ENCODE measurements at regions of chr9 and their contacts with region 1.

Region 1: DNA sequence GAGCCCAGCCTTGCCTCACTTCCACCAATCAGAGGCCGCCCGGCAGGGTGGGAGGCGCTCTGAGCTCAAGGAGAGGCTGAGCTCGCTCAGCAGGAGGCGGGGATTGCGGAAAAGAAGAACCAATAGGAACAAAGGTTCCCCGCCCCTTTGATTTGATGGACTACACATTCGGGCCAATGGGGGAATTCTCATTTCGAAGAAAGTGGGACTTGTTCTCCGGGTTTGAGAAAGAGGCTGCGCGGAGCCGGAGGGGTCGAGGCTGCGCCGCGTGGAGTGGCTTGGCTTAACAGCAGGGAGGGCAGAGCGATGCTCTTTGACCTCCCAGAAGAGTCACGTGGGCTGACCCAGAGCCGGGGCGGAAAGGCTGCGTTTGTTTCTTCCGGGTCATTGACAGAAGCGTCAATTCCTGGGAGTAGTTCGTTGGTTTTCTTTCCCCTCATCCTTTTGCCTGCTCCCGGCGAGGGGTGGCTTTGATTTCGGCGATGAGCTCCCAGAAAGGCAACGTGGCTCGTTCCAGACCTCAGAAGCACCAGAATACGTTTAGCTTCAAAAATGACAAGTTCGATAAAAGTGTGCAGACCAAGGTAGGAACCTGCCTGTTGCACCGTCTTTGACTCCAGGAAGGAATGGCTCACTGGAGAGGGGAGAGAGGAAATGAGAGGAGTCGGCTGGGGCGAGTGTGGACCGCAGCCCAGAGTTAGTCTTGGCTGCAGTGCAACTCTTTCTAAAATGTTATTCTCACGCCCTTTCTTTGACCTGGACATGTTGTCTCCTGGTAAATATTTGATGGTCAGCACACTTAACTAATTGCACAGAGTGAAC is at the start of gene C9orf85:
- DNase-seq: peak; percentile 97
- H3K4me3 Mint-ChIP-seq: peak within 1 kb of the TSS; percentile 99
- H3K27ac Mint-ChIP-seq: peak within 1 kb of the TSS; percentile 92
- H3K4me1 Mint-ChIP-seq: peaks cover 55% of the 10 kb centered on the region
- H3K27me3 Mint-ChIP-seq: no peaks in the 10 kb centered on the region
- total RNA-seq, gene C9orf85: 6.2 to 6.7 TPM

Region 2: GRCh38 chr9:71604197-71605063 is 307.0 kb before region 1 on chr9:
- CTCF ChIA-PET with region 1: no interaction called
- intact Hi-C with region 1: loop called (anchors 10 kb)
- DNase-seq: peak; percentile 89
- H3K4me3 Mint-ChIP-seq: no peak overlapping the region
- H3K27ac Mint-ChIP-seq: no peak overlapping the region
- H3K4me1 Mint-ChIP-seq: no peaks in the 10 kb centered on the region
- H3K27me3 Mint-ChIP-seq: no peaks in the 10 kb centered on the region

Region 3: GRCh38 chr9:71663931-71664459 is 247.5 kb before region 1 on chr9:
- CTCF ChIA-PET with region 1: no interaction called
- intact Hi-C with region 1: no loop called
- DNase-seq: no peak
- H3K4me3 Mint-ChIP-seq: no peak overlapping the region
- H3K27ac Mint-ChIP-seq: no peak overlapping the region
- H3K4me1 Mint-ChIP-seq: no peaks in the 10 kb centered on the region
- H3K27me3 Mint-ChIP-seq: peaks cover 2% of the 10 kb centered on the region

Region 4: GRCh38 chr9:71806901-71807307 is 104.6 kb before region 1 on chr9:
- CTCF ChIA-PET with region 1: interaction called, 4 read pairs
- intact Hi-C with region 1: loop called (anchors 1 kb)
- DNase-seq: peak; percentile 77
- H3K4me3 Mint-ChIP-seq: no peak overlapping the region
- H3K27ac Mint-ChIP-seq: no peak overlapping the region
- H3K4me1 Mint-ChIP-seq: peaks cover 8% of the 10 kb centered on the region
- H3K27me3 Mint-ChIP-seq: no peaks in the 10 kb centered on the region

Region 5: GRCh38 chr9:71897577-71897976 is 13.9 kb before region 1 on chr9:
- CTCF ChIA-PET with region 1: interaction called, 3 read pairs
- intact Hi-C with region 1: loop called (anchors 2 kb)
- DNase-seq: peak; percentile 33
- H3K4me3 Mint-ChIP-seq: no peak overlapping the region
- H3K27ac Mint-ChIP-seq: no peak overlapping the region
- H3K4me1 Mint-ChIP-seq: peaks cover 66% of the 10 kb centered on the region
- H3K27me3 Mint-ChIP-seq: no peaks in the 10 kb centered on the region

Region 6: DNA sequence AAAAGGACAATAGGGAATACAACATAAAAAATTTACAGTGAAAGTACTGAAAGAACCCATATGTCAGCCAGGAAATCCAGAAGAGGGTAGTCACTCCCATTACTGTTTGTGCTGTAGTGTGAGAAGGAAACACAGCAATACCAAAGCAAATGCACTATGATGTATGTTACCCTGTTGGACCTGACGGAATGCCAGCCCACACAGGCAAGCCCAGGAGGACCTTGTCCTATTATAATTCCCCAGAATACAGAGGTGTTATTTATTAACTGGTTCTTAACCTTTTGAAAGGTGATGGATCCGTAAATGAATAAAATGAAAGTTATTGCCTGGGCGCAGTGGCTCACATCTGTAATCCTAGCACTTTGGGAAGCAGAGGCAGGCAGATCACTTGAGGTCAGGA is 316.8 kb after region 1 on chr9:
- CTCF ChIA-PET with region 1: no interaction called
- intact Hi-C with region 1: no loop called
- DNase-seq: no peak
- H3K4me3 Mint-ChIP-seq: no peak overlapping the region
- H3K27ac Mint-ChIP-seq: no peak overlapping the region
- H3K4me1 Mint-ChIP-seq: no peaks in the 10 kb centered on the region
- H3K27me3 Mint-ChIP-seq: peaks cover 2% of the 10 kb centered on the region

Region 7: GRCh38 chr9:72526901-72527800 is 615.7 kb after region 1 on chr9:
- CTCF ChIA-PET with region 1: no interaction called
- intact Hi-C with region 1: loop called (anchors 10 kb)
- DNase-seq: peak; percentile 92
- H3K4me3 Mint-ChIP-seq: peak overlapping the region; percentile 71
- H3K27ac Mint-ChIP-seq: peak overlapping the region; percentile 91
- H3K4me1 Mint-ChIP-seq: peaks cover 38% of the 10 kb centered on the region
- H3K27me3 Mint-ChIP-seq: no peaks in the 10 kb centered on the region

Measured in activated naive CD4-positive, alpha-beta T cell treated with anti-CD3 and anti-CD28 coated beads for 36 hours (primary cell).